Left ventricle myocardium superior (tissue), 1 donor: ENCODE measurements at regions of chr1 and their contacts with region 1.

Region 1: DNA sequence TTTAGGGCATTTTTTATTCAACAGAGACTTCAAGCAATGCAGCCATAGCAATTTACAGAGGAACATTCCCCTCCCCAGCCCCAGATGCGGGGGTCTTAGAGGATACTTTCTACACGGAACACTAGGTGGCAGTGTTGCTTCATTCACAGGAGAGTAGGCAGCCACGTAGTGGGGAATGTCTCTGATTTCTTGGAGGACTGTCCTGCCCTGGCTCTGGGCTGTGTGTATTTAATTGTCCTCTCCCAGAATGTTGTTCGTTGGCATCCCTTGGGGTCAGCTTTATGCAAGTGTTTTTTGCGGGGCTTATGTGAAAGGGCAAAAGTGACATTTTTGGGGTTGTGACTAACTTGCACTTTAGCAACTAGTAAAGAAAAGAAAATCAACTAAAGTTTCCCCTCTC is 96.9 kb downstream of the PAPPA2 start:
- DNase-seq: peak; percentile 26
- ATAC-seq: peak; percentile 96

Region 2: GRCh38 chr1:176330782-176331181 is 229.1 kb before region 1 on chr1:
- intact Hi-C with region 1: no loop called
- DNase-seq: no peak
- ATAC-seq: no peak

Region 3: DNA sequence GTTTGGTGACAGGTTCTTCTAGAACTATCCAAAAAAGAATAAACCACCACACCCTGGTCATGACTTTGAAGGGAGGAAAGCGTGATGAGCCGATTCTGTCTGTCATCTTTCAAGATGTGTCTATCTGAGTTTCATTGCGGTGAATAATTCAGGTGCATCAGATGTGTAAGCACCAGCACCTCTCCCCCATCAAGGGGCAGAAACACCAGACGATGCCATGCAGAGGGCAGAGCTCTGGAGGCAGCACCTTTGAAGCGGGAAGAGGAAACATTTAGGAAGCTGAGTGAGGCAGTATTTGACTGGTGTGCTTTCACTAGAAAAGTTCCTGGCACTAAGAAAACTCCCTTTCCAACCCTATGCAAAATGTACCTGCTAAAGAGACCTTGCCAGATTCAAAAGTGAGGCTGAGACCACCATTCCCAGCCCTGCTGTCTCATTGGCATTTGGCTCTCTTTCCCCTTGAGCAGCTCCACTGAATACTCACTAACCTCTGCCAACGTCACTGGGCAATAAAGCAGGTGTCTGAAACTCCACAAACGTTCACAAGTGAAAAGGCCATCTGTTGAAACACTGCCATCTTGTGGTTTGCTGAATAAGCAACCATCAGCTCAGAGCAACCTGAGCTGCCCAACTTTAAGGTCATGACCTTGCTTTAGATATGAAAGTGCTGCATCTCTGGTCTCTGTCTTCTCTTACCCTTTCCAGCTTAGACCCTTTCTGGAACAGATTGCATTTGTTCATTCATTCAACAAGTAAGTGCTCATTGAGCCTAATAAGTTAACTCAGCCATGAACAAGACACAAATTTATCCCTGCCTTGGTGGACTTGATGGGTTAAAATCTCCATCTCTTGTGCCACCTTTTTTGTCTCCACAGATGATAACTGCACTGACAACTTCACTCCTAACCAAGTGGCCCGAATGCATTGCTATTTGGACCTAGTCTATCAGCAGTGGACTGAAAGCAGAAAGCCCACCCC is 131.7 kb after region 1 on chr1:
- intact Hi-C with region 1: loop called (anchors 5 kb)
- DNase-seq: no peak
- ATAC-seq: peak; percentile 65

Region 4: GRCh38 chr1:176843352-176844297 is 283.7 kb after region 1 on chr1:
- intact Hi-C with region 1: loop called (anchors 5 kb)
- DNase-seq: peak; percentile 39
- ATAC-seq: peak; percentile 55

Region 5: GRCh38 chr1:176880954-176881595 is 321.2 kb after region 1 on chr1:
- intact Hi-C with region 1: loop called (anchors 5 kb)
- DNase-seq: peak; percentile 74
- ATAC-seq: peak; percentile 91